Endothelial cell of umbilical vein (primary cell): ENCODE measurements at regions of chr21 and their contacts with region 1.

Region 1: DNA sequence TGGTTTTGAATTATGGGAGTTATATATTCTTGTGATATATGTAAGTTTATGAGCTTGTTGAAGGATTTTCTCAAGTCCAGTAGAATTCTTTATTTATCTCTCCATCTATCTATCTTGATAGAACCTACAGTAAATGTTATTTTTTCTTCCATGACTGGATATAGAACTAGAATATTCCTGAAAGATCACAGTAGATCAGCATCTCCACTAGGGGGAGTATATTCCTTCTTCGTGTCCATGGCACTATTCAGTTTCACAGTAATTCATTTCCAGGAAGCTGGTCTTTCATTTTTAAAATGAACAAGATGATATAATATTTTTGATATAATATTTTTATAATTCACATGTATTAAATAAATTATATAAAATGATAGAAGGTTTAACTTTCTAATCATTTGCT is 18.8 kb downstream of the TMPRSS15 start:
- DNase-seq: peak; percentile 1
- H3K4me3 ChIP-seq: no peak overlapping the region
- H3K27ac ChIP-seq: no peak overlapping the region
- H3K4me1 ChIP-seq: no peaks in the 10 kb centered on the region
- H3K27me3 ChIP-seq: no peaks in the 10 kb centered on the region
- CTCF ChIP-seq: peak; percentile 17 to 28
- POLR2A ChIP-seq: no peak

Region 2: DNA sequence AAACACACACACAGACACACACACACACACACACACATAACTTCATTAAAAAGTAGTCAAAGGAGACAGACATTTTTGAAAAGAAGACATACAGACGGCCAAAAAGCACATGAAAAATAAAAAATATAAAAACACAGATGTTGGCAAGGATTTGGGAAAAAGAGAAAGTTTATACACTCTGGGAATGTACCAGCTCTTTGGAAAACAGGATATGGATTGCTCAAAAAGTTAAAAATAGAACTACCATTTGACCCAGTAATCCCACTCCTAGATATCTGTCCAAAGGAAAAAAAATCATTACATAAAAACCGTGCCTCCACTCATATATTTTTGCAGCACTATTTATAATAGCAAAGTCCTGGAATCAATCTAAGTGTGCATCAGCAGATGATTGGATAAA is 437.2 kb before region 1 on chr21:
- CTCF ChIA-PET with region 1: no interaction called
- POLR2A ChIA-PET with region 1: no interaction called
- dilution Hi-C with region 1: no loop called
- intact Hi-C with region 1: no loop called
- DNase-seq: no peak
- H3K4me3 ChIP-seq: no peak overlapping the region
- H3K27ac ChIP-seq: no peak overlapping the region
- H3K4me1 ChIP-seq: no peaks in the 10 kb centered on the region
- H3K27me3 ChIP-seq: no peaks in the 10 kb centered on the region
- CTCF ChIP-seq: no peak
- POLR2A ChIP-seq: no peak

Region 3: GRCh38 chr21:18499761-18500376 is 115.1 kb after region 1 on chr21:
- CTCF ChIA-PET with region 1: no interaction called
- POLR2A ChIA-PET with region 1: no interaction called
- dilution Hi-C with region 1: no loop called
- intact Hi-C with region 1: loop called (anchors 5 kb)
- DNase-seq: peak; percentile 35
- H3K4me3 ChIP-seq: no peak overlapping the region
- H3K27ac ChIP-seq: no peak overlapping the region
- H3K4me1 ChIP-seq: no peaks in the 10 kb centered on the region
- H3K27me3 ChIP-seq: no peaks in the 10 kb centered on the region
- CTCF ChIP-seq: peak; percentile 49 to 55
- POLR2A ChIP-seq: no peak

Region 4: GRCh38 chr21:19322360-19322759 is 937.6 kb after region 1 on chr21:
- CTCF ChIA-PET with region 1: no interaction called
- POLR2A ChIA-PET with region 1: no interaction called
- dilution Hi-C with region 1: no loop called
- intact Hi-C with region 1: no loop called
- DNase-seq: no peak
- H3K4me3 ChIP-seq: no peak overlapping the region
- H3K27ac ChIP-seq: no peak overlapping the region
- H3K4me1 ChIP-seq: no peaks in the 10 kb centered on the region
- H3K27me3 ChIP-seq: no peaks in the 10 kb centered on the region
- CTCF ChIP-seq: no peak
- POLR2A ChIP-seq: no peak

Region 5: GRCh38 chr21:20110368-20110767 is 1725.6 kb after region 1 on chr21:
- CTCF ChIA-PET with region 1: no interaction called
- POLR2A ChIA-PET with region 1: interaction called, 11 read pairs
- dilution Hi-C with region 1: no loop called
- intact Hi-C with region 1: no loop called
- DNase-seq: no peak
- H3K4me3 ChIP-seq: no peak overlapping the region
- H3K27ac ChIP-seq: no peak overlapping the region
- H3K4me1 ChIP-seq: peaks cover 5% of the 10 kb centered on the region
- H3K27me3 ChIP-seq: no peaks in the 10 kb centered on the region
- CTCF ChIP-seq: no peak
- POLR2A ChIP-seq: no peak